Sciatic nerve (tissue), 2 donors: ENCODE measurements at regions of chr12 and their contacts with region 1.

Region 1: DNA sequence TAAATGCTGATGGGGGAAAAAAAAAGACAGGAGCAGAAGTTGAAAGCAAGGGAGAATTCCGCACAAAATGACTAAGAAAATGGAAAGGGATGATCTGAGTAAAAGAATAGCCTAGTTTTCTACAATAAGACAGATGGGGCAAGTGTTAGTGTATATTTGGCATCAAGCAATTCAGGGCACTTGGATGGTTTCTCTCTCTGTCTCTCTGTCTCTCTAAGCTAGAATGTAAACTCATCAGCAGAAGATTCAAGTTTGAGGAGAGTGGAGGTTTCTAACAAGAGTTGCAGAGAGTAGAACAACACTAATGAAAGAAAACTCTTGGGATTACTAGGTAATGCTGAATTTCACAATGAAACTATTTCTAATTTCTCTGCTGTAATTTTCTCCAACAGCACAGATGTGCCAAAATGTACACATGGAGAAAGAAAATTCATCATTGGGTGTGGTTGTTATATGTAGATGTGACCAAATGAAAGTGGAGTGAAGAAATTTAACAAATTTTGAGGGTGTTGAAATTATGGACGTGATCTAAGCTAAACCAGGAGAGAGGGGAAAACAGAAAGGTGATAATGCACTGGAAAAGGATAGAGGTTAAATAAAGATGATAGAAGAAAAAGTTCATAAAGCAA is 237.1 kb downstream of the ACSS3 start:
- DNase-seq: no peak
- ATAC-seq: no peak

Region 2: DNA sequence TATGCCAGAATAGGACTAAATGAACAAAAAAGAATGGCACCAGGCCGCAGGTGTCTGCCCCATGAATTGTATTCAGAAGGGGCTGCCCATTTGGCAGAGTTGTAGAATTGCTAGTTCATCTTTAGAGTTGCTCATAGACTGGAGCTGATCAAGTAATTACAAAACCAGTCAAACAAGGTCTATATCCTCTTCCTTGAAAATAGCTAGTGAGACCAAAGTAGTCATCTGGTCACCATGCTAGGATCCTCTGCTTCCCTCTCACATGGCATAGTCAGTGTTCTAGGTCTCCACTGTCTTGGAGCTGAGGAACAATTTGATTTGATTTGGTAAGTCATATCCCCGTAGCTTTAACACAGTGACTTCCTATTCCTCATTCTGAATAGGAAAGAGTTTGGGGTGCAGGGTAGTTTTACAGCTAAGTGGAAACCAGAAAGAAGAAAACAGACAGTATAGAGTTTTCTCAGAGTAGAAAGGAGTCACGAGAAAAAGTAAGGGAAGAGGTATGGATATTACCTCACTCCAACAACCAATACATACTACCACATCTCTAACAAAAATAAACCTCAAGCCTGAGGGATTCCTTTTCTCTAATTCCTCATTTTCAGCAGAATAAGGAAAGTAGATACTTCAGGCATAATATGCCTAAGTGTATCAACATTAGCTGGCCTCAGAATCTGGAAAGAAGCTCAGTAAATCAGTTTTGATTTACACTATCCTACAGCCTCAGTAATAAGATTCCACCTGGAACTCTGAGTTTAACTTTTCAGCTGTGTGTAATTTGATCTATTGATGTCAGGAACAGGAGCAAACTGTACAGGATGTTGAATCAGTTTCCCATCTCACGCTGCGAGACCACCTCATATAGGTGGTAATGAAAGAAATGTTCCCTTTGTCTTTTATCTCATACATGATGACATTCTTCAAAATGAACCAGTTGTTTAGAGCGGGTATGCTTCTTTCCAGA is 1876.2 kb before region 1 on chr12:
- intact Hi-C with region 1: loop called (anchors 5 kb)
- DNase-seq: no peak
- ATAC-seq: no peak

Region 3: GRCh38 chr12:80881106-80881505 is 433.9 kb before region 1 on chr12:
- intact Hi-C with region 1: loop called (anchors 5 kb)
- DNase-seq: no peak
- ATAC-seq: no peak

Region 4: GRCh38 chr12:81245907-81246611 is 69.0 kb before region 1 on chr12:
- intact Hi-C with region 1: no loop called
- DNase-seq: no peak
- ATAC-seq: peak; percentile 71

Region 5: DNA sequence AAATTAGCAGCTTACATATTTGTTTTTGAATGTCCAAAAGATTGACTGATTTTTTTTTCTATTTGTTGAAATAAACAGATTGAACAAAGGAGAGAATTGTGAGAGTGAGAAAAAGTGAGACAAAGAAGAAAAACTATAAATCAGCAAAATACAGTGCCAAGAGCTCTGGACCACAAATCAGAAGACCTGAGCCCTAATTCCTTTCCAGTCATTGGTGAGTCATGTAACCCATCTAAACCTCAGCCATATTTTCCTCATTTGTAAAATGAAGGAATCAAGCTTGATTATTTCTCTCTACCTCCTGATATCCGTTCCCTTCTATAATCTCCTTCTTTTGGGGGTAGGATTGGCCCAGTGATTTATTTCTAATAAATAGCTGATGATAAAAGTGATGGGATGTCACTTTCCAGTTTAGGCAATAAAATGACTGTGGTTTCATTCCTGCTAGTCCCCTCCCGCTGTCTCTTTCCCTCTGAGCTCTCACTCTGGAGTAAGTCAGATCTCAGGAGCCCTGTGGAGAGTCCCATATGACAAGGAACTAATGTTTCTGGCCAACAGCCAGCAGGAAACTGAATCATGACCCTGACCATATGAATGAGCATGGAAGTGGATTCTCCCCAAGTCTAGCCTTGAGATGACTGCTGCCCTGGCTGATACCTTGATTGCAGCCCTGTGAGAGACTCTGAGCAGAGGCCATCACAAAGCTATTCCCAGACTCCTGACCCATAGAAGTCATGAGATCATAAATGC is 18.3 kb before region 1 on chr12:
- intact Hi-C with region 1: no loop called
- DNase-seq: no peak
- ATAC-seq: no peak

Region 6: DNA sequence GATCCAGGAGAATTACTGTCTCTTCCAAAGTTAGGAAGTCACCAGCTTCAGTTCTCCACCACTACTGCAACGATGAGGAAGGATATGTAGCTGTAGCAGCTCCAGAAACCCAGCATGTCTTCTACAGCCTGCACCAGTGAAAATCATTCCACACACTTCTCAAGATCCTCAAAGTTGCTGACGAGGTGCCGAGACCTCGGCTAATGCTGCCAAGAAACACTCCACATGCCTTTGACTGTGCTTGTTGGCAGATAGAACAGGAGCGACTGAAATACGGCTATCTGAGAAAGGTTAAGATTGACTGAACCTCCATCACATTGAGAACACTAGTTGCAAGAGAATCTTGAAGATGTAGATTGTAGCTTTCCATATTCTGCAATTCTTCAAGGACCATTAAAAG is 202.3 kb after region 1 on chr12:
- intact Hi-C with region 1: no loop called
- DNase-seq: no peak
- ATAC-seq: no peak